Left ventricle myocardium inferior (tissue), 1 donor: ENCODE measurements at regions of chr3 and their contacts with region 1.

Region 1: GRCh38 chr3:139427283-139427993 is 38.0 kb upstream of the COPB2 start:
- DNase-seq: no peak
- H3K4me3 ChIP-seq: no peak overlapping the region
- H3K27ac ChIP-seq: no peak overlapping the region
- H3K4me1 ChIP-seq: peaks cover under 1% of the 10 kb centered on the region
- H3K27me3 ChIP-seq: no peaks in the 10 kb centered on the region
- CTCF ChIP-seq: peak; percentile 85

Region 2: DNA sequence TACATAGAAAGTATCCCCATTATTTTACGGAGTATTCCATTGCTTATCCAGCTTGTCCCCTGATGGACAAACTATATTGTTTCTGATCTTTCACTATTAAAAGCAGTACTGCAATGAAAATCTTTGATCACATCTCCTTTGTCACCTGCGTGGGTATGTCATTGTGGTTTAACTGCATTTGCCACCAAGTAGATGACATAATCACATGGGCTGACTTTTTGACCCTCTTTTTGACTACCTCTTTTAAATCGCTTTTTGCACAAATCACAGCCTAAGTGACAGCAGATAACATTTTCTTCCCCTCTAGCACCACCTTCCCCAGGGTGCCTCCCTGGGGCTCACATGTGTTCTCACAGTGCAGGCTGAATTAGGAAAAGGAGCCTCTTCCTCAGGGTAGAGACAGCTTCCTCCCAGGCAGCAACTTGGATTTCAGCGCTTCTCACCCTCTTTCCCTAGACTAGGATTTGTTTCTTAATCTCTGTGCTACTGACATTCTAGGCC is 113.3 kb after region 1 on chr3:
- intact Hi-C with region 1: loop called (anchors 10 kb)
- DNase-seq: no peak
- H3K4me3 ChIP-seq: peak overlapping the region; percentile 78
- H3K27ac ChIP-seq: no peak overlapping the region
- H3K4me1 ChIP-seq: peaks cover 53% of the 10 kb centered on the region
- H3K27me3 ChIP-seq: no peaks in the 10 kb centered on the region
- CTCF ChIP-seq: no peak

Region 3: GRCh38 chr3:139561959-139562676 is 134.7 kb after region 1 on chr3:
- intact Hi-C with region 1: loop called (anchors 5 kb)
- DNase-seq: no peak
- H3K4me3 ChIP-seq: no peak overlapping the region
- H3K27ac ChIP-seq: no peak overlapping the region
- H3K4me1 ChIP-seq: no peaks in the 10 kb centered on the region
- H3K27me3 ChIP-seq: no peaks in the 10 kb centered on the region
- CTCF ChIP-seq: peak; percentile 75